Astrocyte of the cerebellum (primary cell): ENCODE measurements at regions of chr1 and their contacts with region 1.

Region 1: GRCh38 chr1:228165372-228166169 is at the start of gene IBA57:
- DNase-seq: peak; percentile 95
- H3K4me3 ChIP-seq: peak within 1 kb of the TSS; percentile 72
- CTCF ChIP-seq: peak; percentile 79

Region 2: DNA sequence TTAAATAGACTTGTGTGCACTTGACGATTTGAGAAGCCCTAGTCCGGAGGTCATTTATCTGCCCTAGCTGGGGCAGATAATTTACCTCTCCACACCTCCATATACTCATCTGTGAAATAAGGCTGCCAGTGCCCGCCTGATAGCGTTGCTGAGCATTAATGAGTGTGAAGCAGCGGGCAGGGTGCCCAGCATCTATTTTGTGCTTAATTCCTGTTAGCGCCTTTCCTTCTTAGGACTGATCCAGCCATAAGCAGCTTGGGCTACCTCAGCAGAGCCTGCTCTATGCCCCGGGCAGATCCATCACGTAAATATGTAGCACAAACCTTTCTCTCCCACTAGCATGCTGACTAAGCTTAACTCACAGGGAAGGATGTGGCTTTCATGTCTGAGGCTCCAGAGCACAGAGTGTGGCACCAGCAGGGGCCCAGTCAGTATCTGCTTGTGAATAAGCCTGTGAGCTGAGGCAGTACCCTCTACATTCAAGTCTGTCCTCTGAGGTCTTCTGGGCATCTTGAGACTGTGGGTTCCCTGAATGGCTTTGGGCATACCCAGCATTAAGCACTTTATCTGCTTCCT is 300.1 kb after region 1 on chr1:
- in situ Hi-C with region 1: loop called (anchors 5 kb)
- DNase-seq: no peak
- H3K4me3 ChIP-seq: no peak overlapping the region
- CTCF ChIP-seq: no peak